Caco-2 (cell line): ENCODE measurements at regions of chr2 and their contacts with region 1.

Region 1: GRCh38 chr2:189347540-189347939 is 93.7 kb upstream of the WDR75 start:
- DNase-seq: peak; percentile 62 to 69
- H3K4me3 ChIP-seq: no peak overlapping the region
- H3K4me3 Mint-ChIP-seq: no peak overlapping the region
- H3K27ac Mint-ChIP-seq: peak overlapping the region; percentile 4
- H3K4me1 ChIP-seq: peaks cover 6% of the 10 kb centered on the region
- H3K4me1 Mint-ChIP-seq: peaks cover 17% of the 10 kb centered on the region
- H3K27me3 ChIP-seq: no peaks in the 10 kb centered on the region
- H3K27me3 Mint-ChIP-seq: no peaks in the 10 kb centered on the region
- CTCF ChIP-seq: peak in 1 of 2 experiments; percentile 19

Region 2: GRCh38 chr2:188524519-188525113 is 822.9 kb before region 1 on chr2:
- CTCF ChIA-PET with region 1: no interaction called
- POLR2A ChIA-PET with region 1: no interaction called
- intact Hi-C with region 1: loop called (anchors 5 kb)
- DNase-seq: peak in 1 of 2 experiments; percentile 63
- H3K4me3 ChIP-seq: no peak overlapping the region
- H3K4me3 Mint-ChIP-seq: no peak overlapping the region
- H3K27ac Mint-ChIP-seq: no peak overlapping the region
- H3K4me1 ChIP-seq: no peaks in the 10 kb centered on the region
- H3K4me1 Mint-ChIP-seq: peaks cover 11% of the 10 kb centered on the region
- H3K27me3 ChIP-seq: no peaks in the 10 kb centered on the region
- H3K27me3 Mint-ChIP-seq: no peaks in the 10 kb centered on the region
- CTCF ChIP-seq: peak; percentile 76 to 79

Region 3: DNA sequence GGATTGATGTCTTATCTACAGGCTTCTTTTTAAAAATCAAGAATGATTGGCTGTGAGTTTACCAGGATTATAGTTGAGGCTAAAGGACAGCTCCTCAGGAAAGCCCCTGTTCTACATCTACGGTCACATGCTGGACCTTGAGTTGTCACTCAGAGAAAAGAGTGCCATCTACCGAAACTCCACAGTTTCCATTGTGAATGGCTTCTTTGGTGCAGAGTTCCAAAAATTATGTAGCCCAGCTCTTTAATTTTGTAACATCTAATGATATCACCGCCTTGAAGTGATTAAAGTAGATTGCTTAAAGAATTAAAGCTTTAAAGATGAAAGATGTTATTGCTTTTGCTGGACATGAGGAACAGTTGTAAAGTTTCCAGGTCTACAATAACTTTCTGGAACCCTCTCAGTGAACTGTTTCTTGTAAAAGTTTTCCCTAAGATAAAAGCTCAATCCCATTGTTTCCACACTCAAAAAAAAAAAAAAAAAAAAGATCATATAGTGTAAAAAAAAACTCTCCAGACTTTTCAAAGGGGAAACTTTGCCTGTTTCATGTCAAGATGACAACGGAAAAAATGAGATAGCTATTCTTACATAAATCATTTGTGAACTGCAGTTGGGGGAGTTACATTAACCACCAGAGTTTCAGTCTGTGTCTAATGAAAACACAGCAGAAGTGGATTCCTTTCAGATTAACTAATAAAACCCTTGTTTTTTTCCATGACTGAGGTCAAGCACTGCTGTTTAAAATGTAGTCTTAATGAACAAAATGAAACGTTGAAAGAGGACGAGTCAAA is 369.1 kb before region 1 on chr2:
- CTCF ChIA-PET with region 1: no interaction called
- POLR2A ChIA-PET with region 1: no interaction called
- intact Hi-C with region 1: loop called (anchors 1 kb)
- DNase-seq: peak; percentile 50 to 53
- H3K4me3 ChIP-seq: no peak overlapping the region
- H3K4me3 Mint-ChIP-seq: no peak overlapping the region
- H3K27ac Mint-ChIP-seq: peak overlapping the region; percentile 57
- H3K4me1 ChIP-seq: peaks cover 12% of the 10 kb centered on the region
- H3K4me1 Mint-ChIP-seq: peaks cover 14% of the 10 kb centered on the region
- H3K27me3 ChIP-seq: no peaks in the 10 kb centered on the region
- H3K27me3 Mint-ChIP-seq: no peaks in the 10 kb centered on the region
- CTCF ChIP-seq: peak; percentile 36 to 61

Region 4: DNA sequence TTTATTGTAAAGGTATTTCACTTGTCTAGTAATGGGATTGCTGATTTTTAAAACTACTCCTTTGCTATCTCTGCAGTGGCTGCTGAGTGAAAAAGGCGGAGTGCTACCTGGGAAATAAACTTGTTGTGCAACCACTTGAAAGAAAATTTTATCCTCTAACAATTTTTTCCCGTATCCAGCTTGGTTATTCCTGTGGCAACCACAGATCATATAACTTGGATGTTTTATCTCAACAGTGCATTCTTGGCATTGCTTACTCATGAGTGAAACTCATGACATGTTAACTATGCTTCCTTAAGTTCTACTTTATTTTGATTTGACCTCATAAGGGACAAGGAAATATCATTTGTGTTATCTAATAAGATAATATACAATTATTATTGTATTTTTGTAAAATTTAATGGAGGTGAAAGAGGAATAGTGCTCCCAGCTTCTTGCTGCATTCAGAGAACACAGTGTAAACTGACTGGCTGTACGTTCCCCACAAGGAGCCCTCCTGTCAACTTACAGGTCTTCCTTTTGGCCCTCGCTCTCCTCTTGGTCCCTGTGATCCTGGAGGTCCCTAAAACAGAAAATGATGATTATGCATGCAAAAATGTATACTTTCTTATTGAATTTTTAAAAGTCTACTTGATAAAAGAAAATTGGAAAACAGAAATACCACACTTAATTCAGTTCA is 250.6 kb before region 1 on chr2:
- CTCF ChIA-PET with region 1: no interaction called
- POLR2A ChIA-PET with region 1: no interaction called
- intact Hi-C with region 1: loop called (anchors 1 kb)
- DNase-seq: peak in 1 of 2 experiments; percentile 52
- H3K4me3 ChIP-seq: no peak overlapping the region
- H3K4me3 Mint-ChIP-seq: no peak overlapping the region
- H3K27ac Mint-ChIP-seq: peak overlapping the region; percentile 70
- H3K4me1 ChIP-seq: peaks cover 19% of the 10 kb centered on the region
- H3K4me1 Mint-ChIP-seq: peaks cover 21% of the 10 kb centered on the region
- H3K27me3 ChIP-seq: no peaks in the 10 kb centered on the region
- H3K27me3 Mint-ChIP-seq: no peaks in the 10 kb centered on the region
- CTCF ChIP-seq: no peak

Region 5: GRCh38 chr2:189287982-189288521 is 59.5 kb before region 1 on chr2:
- CTCF ChIA-PET with region 1: no interaction called
- POLR2A ChIA-PET with region 1: no interaction called
- intact Hi-C with region 1: loop called (anchors 1 kb)
- DNase-seq: peak in 1 of 2 experiments; percentile 60
- H3K4me3 ChIP-seq: no peak overlapping the region
- H3K4me3 Mint-ChIP-seq: no peak overlapping the region
- H3K27ac Mint-ChIP-seq: no peak overlapping the region
- H3K4me1 ChIP-seq: peaks cover 5% of the 10 kb centered on the region; the same call in 1 of the 2 replicates
- H3K4me1 Mint-ChIP-seq: peaks cover 15% of the 10 kb centered on the region
- H3K27me3 ChIP-seq: no peaks in the 10 kb centered on the region
- H3K27me3 Mint-ChIP-seq: no peaks in the 10 kb centered on the region
- CTCF ChIP-seq: peak; percentile 38 to 64

Region 6: GRCh38 chr2:189327879-189328847 is 19.4 kb before region 1 on chr2:
- CTCF ChIA-PET with region 1: no interaction called
- POLR2A ChIA-PET with region 1: no interaction called
- intact Hi-C with region 1: no loop called
- DNase-seq: no peak
- H3K4me3 ChIP-seq: no peak overlapping the region
- H3K4me3 Mint-ChIP-seq: no peak overlapping the region
- H3K27ac Mint-ChIP-seq: no peak overlapping the region
- H3K4me1 ChIP-seq: no peaks in the 10 kb centered on the region
- H3K4me1 Mint-ChIP-seq: no peaks in the 10 kb centered on the region
- H3K27me3 ChIP-seq: no peaks in the 10 kb centered on the region
- H3K27me3 Mint-ChIP-seq: no peaks in the 10 kb centered on the region
- CTCF ChIP-seq: no peak